HepG2 (cell line): ENCODE measurements at regions of chr13 and their contacts with region 1.

Region 1: GRCh38 chr13:28140433-28141125 is 2.2 kb downstream of the PAN3 start:
- DNase-seq: no peak
- ATAC-seq: no peak
- H3K4me3 ChIP-seq: peak overlapping the region; percentile 85 to 98 (median 90)
- H3K27ac ChIP-seq: peak overlapping the region; percentile 97
- H3K4me1 ChIP-seq: peaks cover 55% of the 10 kb centered on the region
- H3K27me3 ChIP-seq: no peaks in the 10 kb centered on the region
- CTCF ChIP-seq: no peak
- EP300 ChIP-seq: no peak
- POLR2A ChIP-seq: no peak
- RAD21 ChIP-seq: no peak

Region 2: DNA sequence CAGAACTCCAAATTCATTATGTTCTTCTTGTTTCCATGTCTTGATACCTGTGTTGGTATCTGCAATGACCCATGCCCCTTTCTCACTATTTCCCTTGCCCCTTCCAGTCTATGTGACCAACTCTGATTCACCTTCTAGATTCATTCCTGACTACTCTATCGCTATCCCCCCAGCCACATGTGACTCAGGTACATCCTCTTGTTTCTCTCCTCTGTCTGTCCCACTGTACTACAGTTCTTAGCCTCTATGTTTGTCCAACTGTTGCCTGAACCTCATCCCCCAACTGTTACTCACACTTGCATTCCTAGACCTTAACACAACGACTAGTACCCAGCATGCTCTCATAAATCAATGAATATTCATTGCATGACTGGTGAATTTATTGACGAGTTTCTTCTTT is 30.2 kb before region 1 on chr13:
- CTCF ChIA-PET with region 1: no interaction called
- POLR2A ChIA-PET with region 1: no interaction called
- in situ Hi-C with region 1: no loop called
- intact Hi-C with region 1: no loop called
- DNase-seq: no peak
- ATAC-seq: no peak
- H3K4me3 ChIP-seq: no peak overlapping the region
- H3K27ac ChIP-seq: no peak overlapping the region
- H3K4me1 ChIP-seq: no peaks in the 10 kb centered on the region
- H3K27me3 ChIP-seq: no peaks in the 10 kb centered on the region
- CTCF ChIP-seq: no peak
- EP300 ChIP-seq: no peak
- POLR2A ChIP-seq: no peak
- RAD21 ChIP-seq: no peak

Region 3: GRCh38 chr13:28179974-28180373 is 39.4 kb after region 1 on chr13:
- CTCF ChIA-PET with region 1: no interaction called
- POLR2A ChIA-PET with region 1: no interaction called
- in situ Hi-C with region 1: no loop called
- intact Hi-C with region 1: loop called (anchors 5 kb)
- DNase-seq: no peak
- ATAC-seq: no peak
- H3K4me3 ChIP-seq: no peak overlapping the region
- H3K27ac ChIP-seq: no peak overlapping the region
- H3K4me1 ChIP-seq: no peaks in the 10 kb centered on the region
- H3K27me3 ChIP-seq: no peaks in the 10 kb centered on the region
- CTCF ChIP-seq: no peak
- EP300 ChIP-seq: no peak
- POLR2A ChIP-seq: no peak
- RAD21 ChIP-seq: no peak

Region 4: DNA sequence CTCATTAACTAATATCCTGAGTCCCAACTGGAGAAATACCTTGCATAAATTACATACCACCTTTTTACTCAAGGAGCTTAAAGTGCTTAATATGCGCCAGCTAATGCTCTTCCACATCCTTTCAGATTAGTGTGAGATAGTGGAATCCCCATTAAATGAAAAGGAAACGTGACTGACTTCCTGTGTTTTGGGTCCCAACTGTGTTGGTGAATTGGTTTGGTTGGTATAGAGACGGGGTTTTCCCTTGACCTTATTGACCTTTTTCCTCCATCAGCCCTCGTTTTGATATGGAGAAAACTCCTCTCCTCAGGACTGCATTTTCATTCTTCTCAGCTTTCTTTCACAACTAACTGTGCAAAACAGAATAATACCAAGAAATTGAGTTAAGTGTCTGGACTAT is 161.3 kb after region 1 on chr13:
- CTCF ChIA-PET with region 1: no interaction called
- POLR2A ChIA-PET with region 1: no interaction called
- in situ Hi-C with region 1: no loop called
- intact Hi-C with region 1: no loop called
- DNase-seq: no peak
- ATAC-seq: no peak
- H3K4me3 ChIP-seq: no peak overlapping the region
- H3K27ac ChIP-seq: no peak overlapping the region
- H3K4me1 ChIP-seq: no peaks in the 10 kb centered on the region
- H3K27me3 ChIP-seq: 0 out of 5 replicates have a peak, but pooled peaks cover 0 to 4% of the 10 kb centered on the region in 2 experiments
- CTCF ChIP-seq: no peak
- EP300 ChIP-seq: no peak
- POLR2A ChIP-seq: no peak
- RAD21 ChIP-seq: no peak